ENCODE measurements at regions of chr19 and their contacts with region 1.

Region 1: DNA sequence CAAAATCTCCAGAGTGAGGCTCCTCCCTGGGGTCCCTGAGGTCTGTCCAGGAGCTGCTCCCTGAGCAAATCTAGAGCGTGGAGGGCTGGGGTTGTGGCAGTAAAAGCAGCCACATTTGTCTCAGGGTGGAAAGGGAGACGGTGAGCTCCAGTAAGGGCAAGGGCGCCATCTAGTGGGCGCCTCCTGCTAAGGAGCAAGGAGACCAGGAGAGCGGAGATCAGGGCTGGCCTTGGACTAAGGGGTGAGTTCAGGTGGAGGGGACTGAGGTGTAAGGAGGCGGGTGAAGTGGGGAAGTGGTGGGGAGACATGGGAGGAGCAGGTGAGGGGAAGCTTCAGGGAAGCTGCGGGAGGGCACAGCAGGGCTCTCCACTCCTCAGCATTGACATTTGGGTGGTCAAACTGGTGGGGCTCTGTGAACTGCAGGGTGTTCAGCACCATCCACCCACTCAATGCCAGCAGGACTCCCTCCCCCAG is 5.3 kb upstream of the CEACAM21 start:
- DNase-seq: peak; percentile 92
- ATAC-seq: peak; percentile 98
- H3K4me3 ChIP-seq: no peak overlapping the region
- H3K27ac ChIP-seq: no peak overlapping the region
- H3K4me1 ChIP-seq: peaks cover 3% of the 10 kb centered on the region
- H3K27me3 ChIP-seq: no peaks in the 10 kb centered on the region
- CTCF ChIP-seq: peak; percentile 87

Region 2: GRCh38 chr19:41439441-41440222 is 131.0 kb before region 1 on chr19 and contains the start of gene DMAC2:
- intact Hi-C with region 1: loop called (anchors 10 kb)
- DNase-seq: peak; percentile 97
- ATAC-seq: peak; percentile 96
- H3K4me3 ChIP-seq: peak within 1 kb of the TSS; percentile 72
- H3K27ac ChIP-seq: peak within 1 kb of the TSS; percentile 90
- H3K4me1 ChIP-seq: peaks cover 5% of the 10 kb centered on the region
- H3K27me3 ChIP-seq: no peaks in the 10 kb centered on the region
- CTCF ChIP-seq: peak; percentile 59
- total RNA-seq, gene DMAC2: 54.9 TPM